ENCODE measurements at regions of chr18 and their contacts with region 1.

Region 1: GRCh38 chr18:75183531-75183930 is 25.4 kb downstream of the PTGR3 start:
- DNase-seq: no peak
- ATAC-seq: peak; percentile 72
- H3K4me3 ChIP-seq: no peak overlapping the region
- H3K27ac ChIP-seq: no peak overlapping the region
- H3K4me1 ChIP-seq: no peaks in the 10 kb centered on the region
- H3K27me3 ChIP-seq: no peaks in the 10 kb centered on the region
- CTCF ChIP-seq: no peak

Region 2: DNA sequence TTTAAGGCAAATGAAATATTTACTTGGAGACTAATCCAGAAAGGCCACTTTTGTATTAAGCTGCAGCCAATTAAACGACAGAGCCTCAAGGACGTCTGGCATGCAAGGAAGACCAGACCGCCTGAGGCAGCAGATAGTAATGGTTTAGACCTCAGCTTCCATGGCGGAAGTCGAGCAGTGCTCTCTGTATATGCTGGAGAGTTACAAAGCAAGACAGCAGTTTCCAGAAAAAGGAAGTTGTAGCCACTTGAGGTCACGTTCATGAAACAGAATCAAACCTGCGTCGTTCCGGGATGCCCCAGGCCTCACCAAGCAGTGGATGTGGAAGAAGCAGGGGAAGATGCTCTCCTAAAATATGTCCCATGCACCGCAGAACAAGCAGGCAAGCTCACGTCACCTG is 116.6 kb before region 1 on chr18:
- CTCF ChIA-PET with region 1: interaction called, 15 read pairs
- POLR2A ChIA-PET with region 1: no interaction called
- in situ Hi-C with region 1: no loop called
- intact Hi-C with region 1: no loop called
- DNase-seq: no peak
- ATAC-seq: no peak
- H3K4me3 ChIP-seq: no peak overlapping the region
- H3K27ac ChIP-seq: no peak overlapping the region
- H3K4me1 ChIP-seq: peaks cover 18% of the 10 kb centered on the region
- H3K27me3 ChIP-seq: no peaks in the 10 kb centered on the region
- CTCF ChIP-seq: no peak